T-cell (primary cell): ENCODE measurements at regions of chr14 and their contacts with region 1.

Region 1: GRCh38 chr14:101854366-101854765 is 92.9 kb downstream of the PPP2R5C start:
- DNase-seq: peak in 2 of 35 experiments; percentile 36 to 54
- ATAC-seq: peak; percentile 56 to 83 (median 78)
- H3K4me3 ChIP-seq: peak overlapping the region in 1 of 2 donors; percentile 32
- H3K4me3 Mint-ChIP-seq: peak overlapping the region; percentile 5 to 62 (median 34)
- H3K27ac ChIP-seq: peak overlapping the region; percentile 25
- H3K27ac Mint-ChIP-seq: peak overlapping the region; percentile 50 to 86
- H3K4me1 ChIP-seq: peaks cover 34 to 58% of the 10 kb centered on the region in 2 experiments
- H3K4me1 Mint-ChIP-seq: peaks cover 82 to 90% (median 86%) of the 10 kb centered on the region in 3 donors
- H3K27me3 ChIP-seq: no peaks in the 10 kb centered on the region
- H3K27me3 Mint-ChIP-seq: no peaks in the 10 kb centered on the region

Region 2: DNA sequence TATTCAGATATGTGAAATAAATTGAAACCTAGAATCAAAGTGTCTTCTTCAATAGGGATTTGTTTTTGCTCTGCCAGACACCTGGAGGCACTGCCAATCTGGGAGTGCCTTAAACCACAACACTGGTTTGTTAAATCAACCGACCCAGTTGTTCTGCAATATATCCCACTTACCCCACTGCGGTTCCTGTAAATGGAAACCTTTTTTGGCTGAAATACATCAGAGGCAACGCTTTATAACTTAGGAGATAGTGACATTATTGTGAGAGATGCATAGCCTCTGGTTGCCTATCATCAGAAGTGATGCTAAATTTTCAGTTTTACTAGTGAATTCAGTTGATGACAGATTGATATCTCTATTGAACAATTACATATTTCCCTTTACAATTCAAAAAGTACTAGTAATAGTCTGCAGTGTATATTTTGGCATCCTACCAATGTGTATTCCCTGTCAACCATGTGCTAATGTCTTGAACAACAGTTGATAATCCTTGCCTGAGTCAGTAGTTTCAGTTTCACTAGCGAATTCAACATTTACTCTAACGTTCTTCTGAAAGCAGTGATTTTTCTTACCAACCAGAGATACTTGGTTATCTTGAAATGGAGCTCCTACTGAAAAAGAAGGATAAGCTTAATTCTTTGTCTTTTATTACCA is 62.3 kb before region 1 on chr14:
- CTCF ChIA-PET with region 1: no interaction called
- POLR2A ChIA-PET with region 1: interaction called in 1 of 2 experiments, 11 read pairs
- DNase-seq: peak in 1 of 35 experiments; percentile 61
- ATAC-seq: peak; percentile 61 to 84 (median 73)
- H3K4me3 ChIP-seq: peak overlapping the region; percentile 5 to 41
- H3K4me3 Mint-ChIP-seq: peak overlapping the region; percentile 72 to 73 (median 72)
- H3K27ac ChIP-seq: peak overlapping the region; percentile 82
- H3K27ac Mint-ChIP-seq: peak overlapping the region; percentile 89 to 92
- H3K4me1 ChIP-seq: peaks cover 6 to 13% of the 10 kb centered on the region in 2 experiments
- H3K4me1 Mint-ChIP-seq: peaks cover 24 to 41% (median 25%) of the 10 kb centered on the region in 3 donors
- H3K27me3 ChIP-seq: no peaks in the 10 kb centered on the region
- H3K27me3 Mint-ChIP-seq: no peaks in the 10 kb centered on the region

Region 3: DNA sequence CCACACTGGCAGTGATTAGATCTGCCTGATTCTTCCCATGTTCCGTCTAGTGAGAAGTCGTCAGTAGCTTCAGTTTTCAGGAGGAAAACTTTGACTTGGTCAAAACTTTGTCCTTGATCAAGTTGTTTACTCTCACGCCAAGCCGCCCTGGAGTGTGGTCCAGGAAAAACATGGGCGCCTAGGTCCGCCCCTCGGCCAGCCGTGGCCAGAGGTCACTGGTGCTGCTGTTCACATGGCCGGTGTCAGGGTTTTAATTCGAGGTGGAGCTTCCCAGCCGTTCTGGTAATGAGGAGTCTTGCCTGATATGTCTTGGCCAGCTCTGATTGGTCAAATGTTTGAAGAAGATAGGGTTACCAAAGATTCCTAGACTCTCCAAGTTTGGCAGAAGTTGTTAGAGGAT is 21.3 kb before region 1 on chr14:
- CTCF ChIA-PET with region 1: no interaction called
- POLR2A ChIA-PET with region 1: no interaction called
- DNase-seq: no peak
- ATAC-seq: no peak
- H3K4me3 ChIP-seq: no peak overlapping the region
- H3K4me3 Mint-ChIP-seq: peak overlapping the region in 2 of 3 donors; percentile 31 to 53
- H3K27ac ChIP-seq: no peak overlapping the region
- H3K27ac Mint-ChIP-seq: peak overlapping the region; percentile 66 to 76
- H3K4me1 ChIP-seq: peaks cover 26 to 84% of the 10 kb centered on the region in 2 experiments
- H3K4me1 Mint-ChIP-seq: peaks cover 95 to 98% (median 95%) of the 10 kb centered on the region in 3 donors
- H3K27me3 ChIP-seq: no peaks in the 10 kb centered on the region
- H3K27me3 Mint-ChIP-seq: no peaks in the 10 kb centered on the region

Region 4: DNA sequence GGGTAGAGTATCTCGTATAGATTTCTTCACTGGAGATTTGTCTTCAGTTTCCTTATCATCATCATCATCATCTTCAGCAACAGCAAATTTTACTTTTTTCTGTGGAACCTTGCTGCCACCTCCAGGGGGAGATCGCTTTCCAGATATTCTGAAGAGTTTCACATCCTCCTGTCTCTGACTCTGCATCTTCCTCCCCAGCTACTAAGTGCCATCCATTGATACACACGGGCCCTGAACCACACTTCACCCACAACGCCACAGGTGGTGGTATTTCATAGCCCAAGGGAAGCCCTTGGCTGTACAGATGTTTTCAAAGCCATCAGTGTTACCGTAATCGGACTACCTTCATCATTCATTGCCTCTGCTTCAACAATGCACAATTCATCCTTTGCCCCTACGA is 10.7 kb before region 1 on chr14:
- CTCF ChIA-PET with region 1: interaction called in 1 of 2 experiments, 11 read pairs
- POLR2A ChIA-PET with region 1: interaction called, 3 to 4 read pairs
- DNase-seq: peak in 33 of 35 experiments; percentile 37 to 83 (median 55)
- ATAC-seq: peak; percentile 59 to 75 (median 70)
- H3K4me3 ChIP-seq: no peak overlapping the region
- H3K4me3 Mint-ChIP-seq: peak overlapping the region; percentile 3 to 29 (median 18)
- H3K27ac ChIP-seq: peak overlapping the region; percentile 55
- H3K27ac Mint-ChIP-seq: peak overlapping the region; percentile 77 to 88
- H3K4me1 ChIP-seq: peaks cover 23 to 79% of the 10 kb centered on the region in 2 experiments
- H3K4me1 Mint-ChIP-seq: peaks cover 93 to 97% (median 94%) of the 10 kb centered on the region in 3 donors
- H3K27me3 ChIP-seq: no peaks in the 10 kb centered on the region
- H3K27me3 Mint-ChIP-seq: no peaks in the 10 kb centered on the region